MCF 10A (cell line): ENCODE measurements at regions of chr18 and their contacts with region 1.

Region 1: DNA sequence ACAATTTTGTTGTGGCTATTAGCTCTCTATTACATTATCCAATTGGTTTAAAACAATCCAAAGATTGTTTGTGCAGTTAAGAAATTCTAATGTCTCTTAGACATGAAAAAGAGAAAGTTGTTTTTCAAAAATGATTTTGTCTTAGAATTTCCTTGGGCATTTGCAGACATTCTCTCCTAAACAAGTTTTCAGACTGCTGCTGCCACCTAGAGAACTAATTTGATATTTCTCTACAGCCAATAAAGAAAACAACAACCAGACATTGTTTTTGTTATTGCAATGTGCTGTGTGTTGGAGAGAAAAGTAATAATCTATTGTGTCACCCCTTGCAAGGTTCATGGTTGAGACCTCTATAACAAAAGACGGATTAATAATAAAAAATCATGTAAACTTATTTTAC is 119.0 kb upstream of the SYT4 start:
- DNase-seq: peak; percentile 33
- H3K4me3 Mint-ChIP-seq: no peak overlapping the region
- H3K27ac Mint-ChIP-seq: no peak overlapping the region
- H3K4me1 Mint-ChIP-seq: peaks cover 10% of the 10 kb centered on the region
- H3K27me3 Mint-ChIP-seq: peaks cover 20% of the 10 kb centered on the region
- CTCF ChIP-seq: peak; percentile 49

Region 2: GRCh38 chr18:43277164-43277600 is 119.1 kb before region 1 on chr18 and contains the start of gene SYT4:
- CTCF ChIA-PET with region 1: no interaction called
- POLR2A ChIA-PET with region 1: no interaction called
- intact Hi-C with region 1: loop called (anchors 2 kb)
- DNase-seq: peak; percentile 56
- H3K4me3 Mint-ChIP-seq: no peak within 1 kb of the TSS
- H3K27ac Mint-ChIP-seq: no peak within 1 kb of the TSS
- H3K4me1 Mint-ChIP-seq: no peaks in the 10 kb centered on the region
- H3K27me3 Mint-ChIP-seq: peaks cover 73% of the 10 kb centered on the region
- CTCF ChIP-seq: no peak
- total RNA-seq, gene SYT4: not detected in 2 replicates